ENCODE measurements at regions of chr19 and their contacts with region 1.

Region 1: GRCh38 chr19:16185123-16185767 is at the start of gene FAM32A:
- DNase-seq: peak; percentile 100
- H3K4me3 Mint-ChIP-seq: peak within 1 kb of the TSS; percentile 100
- H3K27ac Mint-ChIP-seq: peak within 1 kb of the TSS; percentile 95
- H3K4me1 Mint-ChIP-seq: peaks cover 27% of the 10 kb centered on the region
- H3K27me3 Mint-ChIP-seq: peaks cover 2% of the 10 kb centered on the region
- total RNA-seq, gene FAM32A: 59.2 and 65.2 TPM in 2 replicates

Region 2: DNA sequence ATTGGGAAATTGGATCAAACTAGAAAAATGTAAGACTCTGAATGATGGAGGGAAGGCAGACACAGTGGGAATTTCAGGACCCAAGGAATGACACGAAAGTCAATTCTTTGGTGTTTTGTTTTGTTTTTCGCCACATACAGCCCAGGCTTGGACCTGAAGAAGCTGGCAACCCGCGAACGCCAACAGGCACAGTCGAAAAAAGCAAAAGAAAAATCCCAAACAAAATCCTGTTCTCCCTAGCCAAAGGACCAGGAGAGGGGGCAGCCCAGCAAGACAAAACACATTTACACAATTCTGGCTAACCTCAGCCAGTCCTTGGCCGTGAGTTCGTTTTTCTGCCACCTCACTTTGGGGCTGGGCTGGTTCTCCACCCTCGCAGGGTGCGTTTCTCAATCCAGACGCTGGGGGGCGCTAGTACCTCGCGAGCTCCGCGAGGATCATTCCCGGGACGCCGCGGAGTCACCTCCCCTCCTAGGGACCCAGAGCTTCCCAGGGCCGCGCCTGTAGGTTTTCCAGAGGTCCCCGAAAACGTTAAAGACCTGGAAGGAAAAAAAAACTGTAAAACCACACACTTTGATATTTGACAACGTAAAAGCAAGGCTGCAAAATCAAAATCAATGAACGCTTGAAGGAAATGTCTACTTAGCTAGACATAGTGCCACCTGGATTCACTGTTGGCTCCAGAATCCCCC is 143.8 kb before region 1 on chr19:
- intact Hi-C with region 1: loop called (anchors 1 kb)
- DNase-seq: peak; percentile 94
- H3K4me3 Mint-ChIP-seq: peak overlapping the region; percentile 62
- H3K27ac Mint-ChIP-seq: no peak overlapping the region
- H3K4me1 Mint-ChIP-seq: peaks cover 7% of the 10 kb centered on the region
- H3K27me3 Mint-ChIP-seq: peaks cover 13% of the 10 kb centered on the region

Region 3: DNA sequence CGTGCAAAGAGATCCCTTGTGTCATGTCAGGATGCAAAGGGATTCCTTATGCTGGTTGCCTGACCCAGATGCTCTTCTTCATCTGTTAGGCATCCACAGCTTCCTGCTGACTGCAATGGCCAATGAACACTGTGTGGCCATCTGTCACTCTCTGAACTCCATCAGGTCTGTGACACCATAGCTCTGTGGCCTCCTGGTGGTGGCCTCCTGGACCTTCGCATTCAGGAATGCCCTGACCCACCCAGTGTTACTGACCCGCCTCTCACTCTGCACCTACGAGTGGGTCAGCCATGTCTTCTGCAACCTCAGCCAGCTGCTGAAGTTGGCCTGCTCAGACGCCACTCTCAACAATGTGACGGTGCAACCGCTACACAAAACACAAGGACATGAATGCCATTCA is 132.9 kb before region 1 on chr19:
- intact Hi-C with region 1: no loop called
- DNase-seq: no peak
- H3K4me3 Mint-ChIP-seq: no peak overlapping the region
- H3K27ac Mint-ChIP-seq: no peak overlapping the region
- H3K4me1 Mint-ChIP-seq: peaks cover 10% of the 10 kb centered on the region
- H3K27me3 Mint-ChIP-seq: peaks cover 19% of the 10 kb centered on the region

Region 4: GRCh38 chr19:16111160-16111908 is 73.9 kb before region 1 on chr19 and contains the start of gene RAB8A:
- intact Hi-C with region 1: loop called (anchors 1 kb)
- DNase-seq: peak; percentile 100
- H3K4me3 Mint-ChIP-seq: peak within 1 kb of the TSS; percentile 95
- H3K27ac Mint-ChIP-seq: peak within 1 kb of the TSS; percentile 95
- H3K4me1 Mint-ChIP-seq: peaks cover 26% of the 10 kb centered on the region
- H3K27me3 Mint-ChIP-seq: no peaks in the 10 kb centered on the region
- total RNA-seq, gene RAB8A: 227 and 247 TPM in 2 replicates

Region 5: GRCh38 chr19:16143399-16144245 is 41.6 kb before region 1 on chr19 and contains the start of gene HSH2D:
- intact Hi-C with region 1: loop called (anchors 1 kb)
- DNase-seq: peak; percentile 95
- H3K4me3 Mint-ChIP-seq: peak within 1 kb of the TSS; percentile 96
- H3K27ac Mint-ChIP-seq: peak within 1 kb of the TSS; percentile 98
- H3K4me1 Mint-ChIP-seq: peaks cover 45% of the 10 kb centered on the region
- H3K27me3 Mint-ChIP-seq: no peaks in the 10 kb centered on the region
- total RNA-seq, gene HSH2D: 22.7 and 23.1 TPM in 2 replicates

Region 6: GRCh38 chr19:16197622-16198369 is 12.6 kb after region 1 on chr19 and contains the start of gene AP1M1:
- intact Hi-C with region 1: loop called (anchors 1 kb)
- DNase-seq: peak; percentile 100
- H3K4me3 Mint-ChIP-seq: peak within 1 kb of the TSS; percentile 93
- H3K27ac Mint-ChIP-seq: peak within 1 kb of the TSS; percentile 92
- H3K4me1 Mint-ChIP-seq: peaks cover 39% of the 10 kb centered on the region
- H3K27me3 Mint-ChIP-seq: no peaks in the 10 kb centered on the region
- total RNA-seq, gene AP1M1: 107 and 111 TPM in 2 replicates

Region 7: GRCh38 chr19:16208064-16208759 is 23.0 kb after region 1 on chr19:
- intact Hi-C with region 1: no loop called
- DNase-seq: no peak
- H3K4me3 Mint-ChIP-seq: peak overlapping the region; percentile 15
- H3K27ac Mint-ChIP-seq: peak overlapping the region; percentile 75
- H3K4me1 Mint-ChIP-seq: peaks cover 35% of the 10 kb centered on the region
- H3K27me3 Mint-ChIP-seq: no peaks in the 10 kb centered on the region

Measured in activated CD4-positive, alpha-beta T cell treated with anti-CD3 and anti-CD28 coated beads, Interleukin-2, amount 10 ng/mL, durations not matched to agents 24 days and 14 days (primary cell).